ENCODE measurements at regions of chr16 and their contacts with region 1.

Region 1: GRCh38 chr16:66275775-66276428 is 90.6 kb upstream of the CDH5 start:
- DNase-seq: peak; percentile 67
- ATAC-seq: peak; percentile 63
- H3K4me3 ChIP-seq: no peak overlapping the region
- H3K27ac ChIP-seq: no peak overlapping the region
- H3K4me1 ChIP-seq: peaks cover under 1 to 25% of the 10 kb centered on the region in 2 experiments; a peak in 2 of 4 replicates
- H3K27me3 ChIP-seq: peaks cover 4% of the 10 kb centered on the region; the same call in 1 of the 2 replicates
- CTCF ChIP-seq: peak; percentile 73 to 80 (median 73); a peak in 5 of 6 replicates
- POLR2A ChIP-seq: no peak
- RAD21 ChIP-seq: peak; percentile 69

Region 2: GRCh38 chr16:66315210-66315825 is 39.4 kb after region 1 on chr16:
- CTCF ChIA-PET with region 1: interaction called, 14 read pairs
- POLR2A ChIA-PET with region 1: no interaction called
- RAD21 ChIA-PET with region 1: interaction called in 1 of 2 experiments, 3 read pairs
- intact Hi-C with region 1: loop called (anchors 1 kb)
- DNase-seq: peak; percentile 54
- ATAC-seq: peak; percentile 99
- H3K4me3 ChIP-seq: no peak overlapping the region
- H3K27ac ChIP-seq: no peak overlapping the region
- H3K4me1 ChIP-seq: peaks cover 0 to 7% of the 10 kb centered on the region in 2 experiments; a peak in 1 of 4 replicates
- H3K27me3 ChIP-seq: peaks cover 3% of the 10 kb centered on the region; the same call in 1 of the 2 replicates
- CTCF ChIP-seq: peak; percentile 82 to 99 (median 98)
- POLR2A ChIP-seq: no peak
- RAD21 ChIP-seq: peak; percentile 79